HCT116 (cell line): ENCODE measurements at regions of chr19 and their contacts with region 1.

Region 1: DNA sequence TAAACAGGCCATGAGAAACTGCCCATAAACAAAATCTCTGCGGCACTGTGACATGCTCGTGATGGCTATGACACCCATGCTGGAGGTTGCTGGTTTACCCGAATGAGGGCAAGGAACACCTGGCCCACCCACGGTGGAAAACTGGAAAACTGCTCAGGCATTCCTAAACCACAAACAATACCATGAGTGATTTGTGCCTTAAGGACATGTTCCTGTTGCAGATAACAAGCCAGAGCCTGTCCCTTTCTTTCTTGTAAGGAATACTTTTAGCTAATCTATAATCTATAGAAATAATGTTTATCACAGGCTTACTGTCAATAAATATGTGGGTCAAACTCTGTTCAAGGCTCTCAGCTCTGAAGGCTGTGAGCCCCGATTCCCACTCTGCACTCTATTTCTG is 12.1 kb downstream of the ZNF561 start:
- DNase-seq: no peak
- ATAC-seq: no peak
- H3K4me3 ChIP-seq: no peak overlapping the region
- H3K27ac ChIP-seq: no peak overlapping the region
- H3K4me1 ChIP-seq: no peaks in the 10 kb centered on the region
- H3K27me3 ChIP-seq: no peaks in the 10 kb centered on the region
- CTCF ChIP-seq: no peak
- POLR2A ChIP-seq: no peak
- RAD21 ChIP-seq: no peak

Region 2: GRCh38 chr19:9461938-9462337 is 147.0 kb before region 1 on chr19:
- CTCF ChIA-PET with region 1: no interaction called
- POLR2A ChIA-PET with region 1: no interaction called
- RAD21 ChIA-PET with region 1: no interaction called
- intact Hi-C with region 1: no loop called
- DNase-seq: no peak
- ATAC-seq: no peak
- H3K4me3 ChIP-seq: no peak overlapping the region
- H3K27ac ChIP-seq: no peak overlapping the region
- H3K4me1 ChIP-seq: no peaks in the 10 kb centered on the region
- H3K27me3 ChIP-seq: no peaks in the 10 kb centered on the region
- CTCF ChIP-seq: no peak
- POLR2A ChIP-seq: no peak
- RAD21 ChIP-seq: no peak

Region 3: DNA sequence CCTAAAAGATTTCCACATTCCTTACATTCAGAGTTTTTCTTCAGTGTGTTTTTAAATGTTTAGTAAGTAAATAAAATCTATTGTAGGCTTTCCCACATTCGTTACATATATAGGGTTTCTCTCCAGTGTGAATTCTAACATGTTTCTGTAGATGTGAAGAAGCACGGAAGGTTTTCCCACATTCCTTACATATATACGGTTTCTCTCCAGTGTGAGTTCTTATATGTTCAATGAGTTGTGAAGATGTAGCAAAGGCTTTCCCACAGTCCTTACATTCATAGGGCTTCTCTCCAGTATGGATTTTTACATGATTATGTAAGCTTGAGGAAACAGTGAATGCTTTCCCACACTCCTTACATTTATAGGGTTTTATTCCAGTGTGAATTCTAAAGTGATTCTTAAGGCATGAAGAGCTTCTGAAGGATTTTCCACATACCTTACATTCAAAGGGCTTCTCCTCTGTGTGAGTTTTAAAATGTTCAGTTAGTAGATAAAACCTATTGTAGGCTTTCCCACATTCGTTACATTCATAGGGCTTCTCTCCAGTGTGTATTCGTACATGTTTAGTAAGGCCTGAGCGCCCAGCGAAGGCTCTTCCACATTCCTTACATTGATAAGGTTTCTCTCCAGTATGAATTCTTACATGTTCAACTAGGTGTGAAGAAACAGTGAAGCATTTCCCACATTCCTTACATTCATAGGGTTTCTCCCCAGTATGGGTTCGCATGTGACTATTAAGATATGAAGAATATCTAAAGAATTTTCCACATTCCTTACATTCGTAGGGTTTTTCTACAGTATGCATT is 42.8 kb before region 1 on chr19:
- CTCF ChIA-PET with region 1: no interaction called
- POLR2A ChIA-PET with region 1: no interaction called
- RAD21 ChIA-PET with region 1: no interaction called
- intact Hi-C with region 1: no loop called
- DNase-seq: no peak
- ATAC-seq: no peak
- H3K4me3 ChIP-seq: no peak overlapping the region
- H3K27ac ChIP-seq: no peak overlapping the region
- H3K4me1 ChIP-seq: no peaks in the 10 kb centered on the region
- H3K27me3 ChIP-seq: no peaks in the 10 kb centered on the region
- CTCF ChIP-seq: no peak
- POLR2A ChIP-seq: no peak
- RAD21 ChIP-seq: no peak

Region 4: GRCh38 chr19:9580728-9581127 is 28.2 kb before region 1 on chr19:
- CTCF ChIA-PET with region 1: no interaction called
- POLR2A ChIA-PET with region 1: no interaction called
- RAD21 ChIA-PET with region 1: no interaction called
- intact Hi-C with region 1: no loop called
- DNase-seq: no peak
- ATAC-seq: no peak
- H3K4me3 ChIP-seq: no peak overlapping the region
- H3K27ac ChIP-seq: no peak overlapping the region
- H3K4me1 ChIP-seq: peaks cover 3 to 9% of the 10 kb centered on the region in 2 experiments; a peak in 2 of 4 replicates
- H3K27me3 ChIP-seq: no peaks in the 10 kb centered on the region
- CTCF ChIP-seq: no peak
- POLR2A ChIP-seq: no peak
- RAD21 ChIP-seq: no peak

Region 5: DNA sequence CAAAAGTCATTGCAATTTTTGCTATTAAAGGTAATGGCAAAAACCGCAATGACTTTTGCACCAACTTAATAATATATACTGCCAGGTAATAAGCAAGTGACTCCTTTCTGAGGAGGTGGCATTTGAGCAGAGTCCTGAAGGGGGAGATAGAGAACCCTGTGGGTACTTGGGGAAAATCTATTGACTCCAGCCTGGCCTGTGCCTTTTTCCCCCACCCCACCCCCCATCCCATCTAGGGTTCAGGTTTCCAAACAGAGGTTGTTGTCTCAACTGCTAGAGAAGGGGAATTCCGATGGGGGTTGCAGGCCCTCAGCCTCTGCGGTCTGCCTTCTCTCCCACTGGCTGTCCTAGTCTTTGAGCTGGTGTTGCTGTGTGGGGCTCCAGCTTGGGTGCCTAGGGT is 610.8 kb after region 1 on chr19:
- CTCF ChIA-PET with region 1: no interaction called
- POLR2A ChIA-PET with region 1: no interaction called
- RAD21 ChIA-PET with region 1: no interaction called
- intact Hi-C with region 1: loop called (anchors 10 kb)
- DNase-seq: no peak
- ATAC-seq: peak; percentile 85
- H3K4me3 ChIP-seq: no peak overlapping the region
- H3K27ac ChIP-seq: no peak overlapping the region
- H3K4me1 ChIP-seq: peaks cover 0 to 2% of the 10 kb centered on the region in 2 experiments; a peak in 2 of 4 replicates
- H3K27me3 ChIP-seq: no peaks in the 10 kb centered on the region
- CTCF ChIP-seq: peak; percentile 11 to 61 (median 49); a peak in 5 of 6 replicates
- POLR2A ChIP-seq: no peak
- RAD21 ChIP-seq: peak; percentile 27; the same call in 1 of the 2 replicates